ENCODE measurements at regions of chr7 and their contacts with region 1.

Region 1: DNA sequence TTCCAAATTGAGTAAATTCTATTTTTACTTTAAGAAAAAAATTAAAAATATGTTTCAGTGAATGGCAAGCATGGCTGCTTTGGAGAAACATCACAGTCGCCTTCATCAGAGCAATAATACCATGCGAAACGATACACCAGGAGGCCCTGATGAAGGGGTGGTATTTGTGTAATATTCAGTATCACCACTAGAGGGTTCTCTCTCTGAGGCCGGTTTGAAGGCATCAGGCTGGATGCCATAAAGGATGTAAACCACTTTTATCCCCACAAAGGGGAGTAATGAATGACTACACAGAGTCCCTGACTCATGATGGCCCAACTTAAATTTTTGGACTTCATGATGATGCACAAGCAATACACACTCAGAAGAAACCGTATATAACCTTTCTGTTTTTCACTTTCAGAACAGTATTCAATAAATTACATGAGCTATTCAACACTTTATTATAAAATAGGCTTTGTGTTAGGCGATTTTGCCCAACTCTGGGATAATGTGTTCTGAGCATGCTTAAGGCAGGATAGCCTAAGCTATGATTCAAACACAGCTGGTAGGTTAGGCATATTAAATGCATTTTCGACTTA is 95.5 kb downstream of the PPP1R17 start:
- DNase-seq: peak; percentile 20
- ATAC-seq: peak; percentile 96
- H3K4me3 ChIP-seq: no peak overlapping the region
- H3K27ac ChIP-seq: no peak overlapping the region
- H3K4me1 ChIP-seq: no peaks in the 10 kb centered on the region
- H3K27me3 ChIP-seq: no peaks in the 10 kb centered on the region
- CTCF ChIP-seq: peak; percentile 67 to 80 (median 79)
- EP300 ChIP-seq: no peak
- POLR2A ChIP-seq: no peak
- RAD21 ChIP-seq: peak; percentile 60

Region 2: DNA sequence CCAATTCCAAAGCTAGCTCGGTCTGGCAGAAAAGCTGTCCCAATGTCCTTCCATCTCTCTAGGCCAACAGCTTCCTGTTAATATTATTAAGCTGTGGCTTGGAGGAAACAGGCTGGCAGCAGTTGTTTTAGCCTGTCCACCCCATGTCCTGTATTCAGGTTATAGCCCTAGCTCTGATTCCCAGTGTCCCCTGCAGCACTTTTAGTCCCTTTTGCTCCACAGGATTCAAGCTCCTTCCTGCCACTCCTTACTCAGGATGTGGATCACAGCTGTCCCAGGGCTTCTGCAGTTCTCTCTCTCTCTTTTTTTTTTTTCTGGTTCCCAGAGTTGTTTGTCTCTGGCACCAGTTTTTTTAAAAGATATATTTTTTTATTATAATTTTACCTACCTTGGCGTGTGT is 10.3 kb before region 1 on chr7:
- CTCF ChIA-PET with region 1: interaction called, 11 read pairs
- POLR2A ChIA-PET with region 1: no interaction called
- RAD21 ChIA-PET with region 1: no interaction called
- SMC1A ChIA-PET with region 1: interaction called, 7 read pairs
- in situ Hi-C with region 1: no loop called
- intact Hi-C with region 1: no loop called
- DNase-seq: no peak
- ATAC-seq: no peak
- H3K4me3 ChIP-seq: no peak overlapping the region
- H3K27ac ChIP-seq: no peak overlapping the region
- H3K4me1 ChIP-seq: no peaks in the 10 kb centered on the region
- H3K27me3 ChIP-seq: no peaks in the 10 kb centered on the region; a peak in 1 of 4 replicates
- CTCF ChIP-seq: no peak
- EP300 ChIP-seq: no peak
- POLR2A ChIP-seq: no peak
- RAD21 ChIP-seq: no peak

Region 3: GRCh38 chr7:32036557-32036956 is 254.1 kb after region 1 on chr7:
- CTCF ChIA-PET with region 1: interaction called, 18 read pairs
- POLR2A ChIA-PET with region 1: no interaction called
- RAD21 ChIA-PET with region 1: no interaction called
- SMC1A ChIA-PET with region 1: interaction called, 6 read pairs
- in situ Hi-C with region 1: no loop called
- intact Hi-C with region 1: loop called (anchors 2 kb)
- DNase-seq: no peak
- ATAC-seq: peak; percentile 68
- H3K4me3 ChIP-seq: no peak overlapping the region
- H3K27ac ChIP-seq: no peak overlapping the region
- H3K4me1 ChIP-seq: no peaks in the 10 kb centered on the region
- H3K27me3 ChIP-seq: peaks cover 1 to 3% of the 10 kb centered on the region in 2 experiments; a peak in 1 of 4 replicates
- CTCF ChIP-seq: no peak
- EP300 ChIP-seq: no peak
- POLR2A ChIP-seq: no peak
- RAD21 ChIP-seq: no peak

Region 4: GRCh38 chr7:32048970-32049491 is 266.5 kb after region 1 on chr7:
- CTCF ChIA-PET with region 1: interaction called, 11 read pairs
- POLR2A ChIA-PET with region 1: no interaction called
- RAD21 ChIA-PET with region 1: interaction called, 3 read pairs
- SMC1A ChIA-PET with region 1: no interaction called
- in situ Hi-C with region 1: no loop called
- intact Hi-C with region 1: no loop called
- DNase-seq: peak; percentile 48
- ATAC-seq: peak; percentile 83
- H3K4me3 ChIP-seq: no peak overlapping the region
- H3K27ac ChIP-seq: no peak overlapping the region
- H3K4me1 ChIP-seq: no peaks in the 10 kb centered on the region
- H3K27me3 ChIP-seq: 0 out of 4 replicates have a peak, but pooled peaks cover 0 to 3% of the 10 kb centered on the region in 2 experiments
- CTCF ChIP-seq: no peak
- EP300 ChIP-seq: no peak
- POLR2A ChIP-seq: no peak
- RAD21 ChIP-seq: no peak

Region 5: DNA sequence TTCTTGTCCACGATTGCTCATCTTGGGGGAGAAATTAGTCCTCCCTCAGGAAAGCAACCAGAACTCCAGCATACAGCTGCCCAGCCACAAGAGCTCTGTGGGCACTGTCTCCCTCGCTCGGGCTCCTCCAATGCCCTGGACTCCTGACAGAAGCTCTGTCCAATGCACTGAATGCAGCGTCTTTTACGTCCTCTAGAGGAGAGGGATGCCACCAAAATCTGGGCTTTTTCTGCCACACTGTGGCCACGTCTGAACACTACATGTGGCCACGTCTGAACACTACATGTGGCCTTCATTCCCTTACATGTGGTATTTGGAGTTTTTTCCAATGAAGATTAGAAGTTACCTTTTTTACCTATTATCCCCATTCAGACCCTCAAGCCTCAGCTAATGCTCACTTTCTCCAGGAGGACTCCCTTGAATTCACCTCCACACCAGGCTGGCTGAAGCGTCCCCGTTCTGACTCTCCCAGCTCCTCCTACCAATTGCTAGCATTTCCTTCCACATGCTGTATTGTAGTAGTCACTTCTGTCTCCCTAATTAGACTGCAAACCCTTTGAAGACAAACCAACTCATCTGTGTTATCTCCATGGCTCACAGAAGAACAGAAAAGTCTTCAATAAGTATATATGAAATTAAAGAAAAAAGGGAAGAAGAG is 422.0 kb after region 1 on chr7:
- CTCF ChIA-PET with region 1: interaction called, 39 read pairs
- POLR2A ChIA-PET with region 1: no interaction called
- RAD21 ChIA-PET with region 1: interaction called, 7 read pairs
- SMC1A ChIA-PET with region 1: interaction called, 15 read pairs
- in situ Hi-C with region 1: no loop called
- intact Hi-C with region 1: loop called (anchors 10 kb)
- DNase-seq: peak; percentile 5
- ATAC-seq: peak; percentile 97
- H3K4me3 ChIP-seq: no peak overlapping the region
- H3K27ac ChIP-seq: no peak overlapping the region
- H3K4me1 ChIP-seq: no peaks in the 10 kb centered on the region
- H3K27me3 ChIP-seq: no peaks in the 10 kb centered on the region; a peak in 1 of 4 replicates
- CTCF ChIP-seq: peak; percentile 56 to 61 (median 56); a peak in 4 of 6 replicates
- EP300 ChIP-seq: no peak
- POLR2A ChIP-seq: no peak
- RAD21 ChIP-seq: peak; percentile 81

Measured in GM12878 (cell line).